ENCODE measurements at regions of chr14 and their contacts with region 1.

Region 1: DNA sequence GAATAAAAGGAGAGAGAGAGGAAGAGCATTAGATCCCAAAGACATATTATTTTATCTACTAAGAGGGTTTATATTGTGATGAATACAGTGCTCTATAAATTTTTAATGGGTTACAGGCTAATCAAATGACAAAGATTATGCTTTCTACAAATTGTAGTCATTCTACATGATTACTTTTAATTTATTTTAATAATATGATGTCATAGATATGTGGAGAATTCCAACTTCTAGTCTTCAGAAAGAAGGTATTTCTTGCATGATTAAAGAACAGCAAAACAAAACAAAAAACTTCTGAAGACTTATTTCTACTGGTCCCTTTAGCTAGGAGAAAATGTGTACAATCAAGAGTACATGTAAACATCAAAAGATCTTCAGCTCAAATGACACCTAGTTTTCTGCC is 71.5 kb upstream of the FOXG1 start:
- DNase-seq: no peak
- H3K4me3 Mint-ChIP-seq: no peak overlapping the region
- H3K27ac Mint-ChIP-seq: no peak overlapping the region
- H3K4me1 Mint-ChIP-seq: no peaks in the 10 kb centered on the region
- H3K27me3 Mint-ChIP-seq: no peaks in the 10 kb centered on the region
- CTCF ChIP-seq: no peak

Region 2: GRCh38 chr14:28661171-28661772 is 33.8 kb before region 1 on chr14:
- CTCF ChIA-PET with region 1: no interaction called
- intact Hi-C with region 1: loop called (anchors 1 kb)
- DNase-seq: peak; percentile 26
- H3K4me3 Mint-ChIP-seq: no peak overlapping the region
- H3K27ac Mint-ChIP-seq: peak overlapping the region; percentile 87
- H3K4me1 Mint-ChIP-seq: peaks cover 11% of the 10 kb centered on the region
- H3K27me3 Mint-ChIP-seq: no peaks in the 10 kb centered on the region
- CTCF ChIP-seq: no peak

Region 3: DNA sequence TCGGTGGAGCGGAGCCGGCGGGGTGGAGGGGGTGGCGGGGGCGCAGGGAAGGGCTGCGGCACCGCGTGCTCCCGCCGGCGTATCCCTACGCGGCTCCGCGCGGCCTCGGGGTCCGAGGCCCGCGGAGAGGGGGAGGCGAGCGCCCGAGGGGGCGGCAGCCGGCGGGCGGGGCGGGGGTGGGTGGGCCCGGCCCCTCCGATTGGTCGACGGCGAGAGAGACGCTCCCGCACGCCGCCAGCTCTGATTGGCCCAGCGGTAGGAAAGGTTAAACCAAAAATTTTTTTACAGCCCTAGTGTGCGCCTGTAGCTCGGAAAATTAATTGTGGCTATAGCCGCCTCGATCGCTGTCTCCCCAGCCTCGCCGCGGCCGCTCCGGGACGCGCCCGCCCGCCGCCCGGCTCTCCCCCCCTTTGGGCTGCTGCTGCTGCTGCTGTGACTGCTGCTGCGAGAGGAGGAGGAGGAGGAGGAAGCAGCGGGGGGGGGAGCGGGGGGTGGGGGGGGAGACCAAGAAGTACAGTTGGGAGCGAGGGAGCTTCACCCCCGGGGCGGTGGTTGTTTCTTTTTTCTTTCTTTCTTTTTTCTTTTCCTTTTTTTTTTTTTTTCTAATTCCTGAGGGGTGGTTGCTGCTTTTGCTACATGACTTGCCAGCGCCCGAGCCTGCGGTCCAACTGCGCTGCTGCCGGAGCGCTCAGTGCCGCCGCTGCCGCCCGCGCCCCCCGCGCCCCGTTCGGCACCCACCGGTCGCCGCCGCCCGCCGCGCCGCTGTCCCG is 71.6 kb after region 1 on chr14 and contains the start of gene FOXG1:
- CTCF ChIA-PET with region 1: no interaction called
- intact Hi-C with region 1: no loop called
- DNase-seq: no peak
- H3K4me3 Mint-ChIP-seq: no peak within 1 kb of the TSS
- H3K27ac Mint-ChIP-seq: no peak within 1 kb of the TSS
- H3K4me1 Mint-ChIP-seq: no peaks in the 10 kb centered on the region
- H3K27me3 Mint-ChIP-seq: peaks cover 2% of the 10 kb centered on the region
- CTCF ChIP-seq: no peak
- total RNA-seq, gene FOXG1: not detected in 2 replicates

Measured in Calu3 (cell line).